AG04450 (cell line): ENCODE measurements at regions of chrX and their contacts with region 1.

Region 1: GRCh38 chrX:116462827-116463226 is at the start of gene CT83:
- DNase-seq: no peak
- H3K4me3 ChIP-seq: no peak within 1 kb of the TSS
- H3K27ac ChIP-seq: no peak within 1 kb of the TSS
- H3K27me3 ChIP-seq: no peaks in the 10 kb centered on the region
- CTCF ChIP-seq: no peak
- polyA plus RNA-seq, gene CT83: not detected in 2 replicates

Region 2: GRCh38 chrX:117996408-117996807 is 1533.6 kb after region 1 on chrX:
- CTCF ChIA-PET with region 1: interaction called, 11 read pairs
- POLR2A ChIA-PET with region 1: no interaction called
- DNase-seq: no peak
- H3K4me3 ChIP-seq: no peak overlapping the region
- H3K27ac ChIP-seq: no peak overlapping the region
- H3K27me3 ChIP-seq: no peaks in the 10 kb centered on the region
- CTCF ChIP-seq: no peak